Adrenal gland (tissue), 19 donors: ENCODE measurements at regions of chr3 and their contacts with region 1.

Region 1: DNA sequence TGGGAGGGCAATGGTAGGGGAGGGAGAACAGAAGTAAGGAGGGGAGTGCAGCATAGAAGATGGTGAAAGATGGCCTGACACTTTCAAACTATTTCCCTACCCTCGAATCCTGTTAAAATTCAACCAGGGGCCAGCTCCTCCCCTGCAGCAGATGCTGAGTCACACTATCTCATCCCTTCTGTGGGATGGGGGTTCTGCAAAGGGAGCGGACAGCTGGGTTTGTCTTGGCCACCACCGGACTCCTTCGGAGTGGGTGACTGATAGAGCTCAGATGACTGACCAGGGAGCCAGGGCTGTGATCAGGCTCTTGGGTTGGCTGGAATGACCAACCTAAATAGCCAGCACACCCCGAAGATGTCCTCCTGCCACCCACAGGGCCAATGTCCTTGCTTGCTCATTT is 33.6 kb upstream of the TMCC1 start:
- DNase-seq: no peak
- H3K4me3 ChIP-seq: no peak overlapping the region
- H3K27ac ChIP-seq: no peak overlapping the region
- H3K4me1 ChIP-seq: no peaks in the 10 kb centered on the region
- H3K27me3 ChIP-seq: no peaks in the 10 kb centered on the region
- CTCF ChIP-seq: no peak
- POLR2A ChIP-seq: no peak

Region 2: DNA sequence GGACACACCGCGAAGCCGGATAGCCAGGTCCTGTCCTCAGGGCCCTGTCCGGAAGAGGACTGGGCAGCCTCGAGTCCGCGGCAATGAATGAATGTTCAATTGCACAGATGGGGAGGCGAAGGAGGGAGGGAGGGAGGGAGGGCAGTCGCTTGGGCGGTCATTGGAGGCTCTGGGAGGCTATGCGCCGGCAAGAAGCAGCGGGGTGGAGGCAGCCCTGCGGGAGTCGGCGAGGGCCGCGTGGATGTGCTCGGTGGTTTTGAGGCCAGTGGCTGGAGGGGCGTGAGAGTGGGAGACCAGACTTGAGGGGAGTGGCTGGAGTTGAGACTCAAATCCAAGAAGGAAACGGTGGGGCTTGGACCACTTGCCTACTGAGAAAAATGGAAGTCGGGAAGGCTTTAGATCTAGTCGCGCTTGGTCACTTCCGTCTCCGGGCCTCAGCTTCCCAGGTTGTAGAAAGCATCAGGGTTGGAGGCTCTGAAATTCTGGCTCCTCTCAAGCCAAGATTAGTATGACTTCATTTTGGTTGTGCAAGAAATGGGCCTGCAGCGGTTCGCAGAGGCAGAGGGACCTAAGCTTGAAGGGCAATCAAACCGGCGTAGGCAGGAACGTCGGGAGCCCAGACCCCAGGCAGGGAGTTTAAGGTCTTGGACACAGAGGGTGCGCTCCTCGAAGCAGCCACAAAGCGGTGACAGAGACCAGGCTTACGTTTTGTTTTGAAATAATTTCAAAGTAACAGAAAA is 299.5 kb before region 1 on chr3:
- intact Hi-C with region 1: loop called (anchors 2 to 5 kb)
- DNase-seq: peak in 6 of 7 donors; percentile 51 to 90 (median 66)
- H3K4me3 ChIP-seq: peak overlapping the region in 1 of 4 donors; percentile 30
- H3K27ac ChIP-seq: peak overlapping the region; percentile 73 to 92 (median 89)
- H3K4me1 ChIP-seq: peaks cover 29 to 40% of the 10 kb centered on the region in 2 donors
- H3K27me3 ChIP-seq: no peaks in the 10 kb centered on the region
- CTCF ChIP-seq: peak; percentile 36 to 86 (median 67)
- POLR2A ChIP-seq: no peak

Region 3: DNA sequence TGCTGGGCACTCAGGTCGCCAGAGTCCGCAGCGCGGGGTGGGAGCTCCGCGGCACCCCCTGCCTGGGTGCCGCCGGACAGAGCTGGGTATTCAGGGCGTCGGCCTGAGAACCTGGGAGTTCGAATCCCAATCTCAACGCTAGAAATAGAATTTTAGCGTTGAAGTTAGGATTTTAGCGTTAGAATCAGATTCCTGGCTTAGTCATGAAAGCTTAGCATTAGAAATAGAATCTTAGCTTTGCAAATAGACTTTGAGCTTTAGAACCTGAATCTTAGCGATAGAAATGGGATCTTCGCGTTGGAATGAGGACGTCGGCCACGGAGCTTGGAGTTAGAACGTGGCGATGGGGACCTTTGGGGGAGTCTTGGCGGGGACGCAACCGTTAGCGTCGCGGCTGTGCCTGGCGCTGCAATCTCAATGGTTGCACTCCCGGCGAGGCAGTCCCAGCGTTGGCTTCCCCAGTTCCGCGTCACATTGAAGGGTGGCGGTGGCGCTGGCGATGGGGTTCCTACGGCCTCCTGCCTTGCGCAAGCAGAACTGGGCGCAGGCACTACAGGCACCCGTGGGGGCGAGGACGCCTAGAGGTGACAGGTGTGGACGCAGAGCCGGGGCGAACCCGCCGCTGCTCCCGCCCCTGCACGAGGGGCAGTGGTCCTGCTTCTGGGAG is 48.1 kb after region 1 on chr3:
- intact Hi-C with region 1: no loop called
- DNase-seq: peak in 1 of 7 donors; percentile 5
- H3K4me3 ChIP-seq: peak overlapping the region in 1 of 4 donors; percentile 32
- H3K27ac ChIP-seq: no peak overlapping the region
- H3K4me1 ChIP-seq: peaks cover 10 to 12% of the 10 kb centered on the region in 2 donors
- H3K27me3 ChIP-seq: peaks cover 40% of the 10 kb centered on the region
- CTCF ChIP-seq: no peak
- POLR2A ChIP-seq: no peak